Caco-2 (cell line): ENCODE measurements at regions of chr15 and their contacts with region 1.

Region 1: GRCh38 chr15:84929744-84930371 is 45.4 kb downstream of the SLC28A1 start:
- DNase-seq: peak; percentile 84 to 94
- H3K4me3 ChIP-seq: no peak overlapping the region
- H3K4me3 Mint-ChIP-seq: peak overlapping the region; percentile 25
- H3K27ac Mint-ChIP-seq: peak overlapping the region; percentile 85
- H3K4me1 ChIP-seq: peaks cover 31% of the 10 kb centered on the region
- H3K4me1 Mint-ChIP-seq: peaks cover 16% of the 10 kb centered on the region
- H3K27me3 ChIP-seq: no peaks in the 10 kb centered on the region
- H3K27me3 Mint-ChIP-seq: no peaks in the 10 kb centered on the region
- CTCF ChIP-seq: no peak

Region 2: GRCh38 chr15:84658080-84658787 is 271.6 kb before region 1 on chr15 and contains the start of gene NMB:
- CTCF ChIA-PET with region 1: interaction called, 4 read pairs
- POLR2A ChIA-PET with region 1: interaction called, 4 read pairs
- intact Hi-C with region 1: loop called (anchors 1 kb)
- DNase-seq: peak; percentile 89 to 92
- H3K4me3 ChIP-seq: peak within 1 kb of the TSS; percentile 60
- H3K4me3 Mint-ChIP-seq: peak within 1 kb of the TSS; percentile 77
- H3K27ac Mint-ChIP-seq: peak within 1 kb of the TSS; percentile 35
- H3K4me1 ChIP-seq: peaks cover 10% of the 10 kb centered on the region; the same call in 1 of the 2 replicates
- H3K4me1 Mint-ChIP-seq: peaks cover 6% of the 10 kb centered on the region
- H3K27me3 ChIP-seq: no peaks in the 10 kb centered on the region
- H3K27me3 Mint-ChIP-seq: no peaks in the 10 kb centered on the region
- CTCF ChIP-seq: peak; percentile 80 to 94
- total RNA-seq, gene NMB: 7.5 and 8.6 TPM in 2 replicates

Region 3: DNA sequence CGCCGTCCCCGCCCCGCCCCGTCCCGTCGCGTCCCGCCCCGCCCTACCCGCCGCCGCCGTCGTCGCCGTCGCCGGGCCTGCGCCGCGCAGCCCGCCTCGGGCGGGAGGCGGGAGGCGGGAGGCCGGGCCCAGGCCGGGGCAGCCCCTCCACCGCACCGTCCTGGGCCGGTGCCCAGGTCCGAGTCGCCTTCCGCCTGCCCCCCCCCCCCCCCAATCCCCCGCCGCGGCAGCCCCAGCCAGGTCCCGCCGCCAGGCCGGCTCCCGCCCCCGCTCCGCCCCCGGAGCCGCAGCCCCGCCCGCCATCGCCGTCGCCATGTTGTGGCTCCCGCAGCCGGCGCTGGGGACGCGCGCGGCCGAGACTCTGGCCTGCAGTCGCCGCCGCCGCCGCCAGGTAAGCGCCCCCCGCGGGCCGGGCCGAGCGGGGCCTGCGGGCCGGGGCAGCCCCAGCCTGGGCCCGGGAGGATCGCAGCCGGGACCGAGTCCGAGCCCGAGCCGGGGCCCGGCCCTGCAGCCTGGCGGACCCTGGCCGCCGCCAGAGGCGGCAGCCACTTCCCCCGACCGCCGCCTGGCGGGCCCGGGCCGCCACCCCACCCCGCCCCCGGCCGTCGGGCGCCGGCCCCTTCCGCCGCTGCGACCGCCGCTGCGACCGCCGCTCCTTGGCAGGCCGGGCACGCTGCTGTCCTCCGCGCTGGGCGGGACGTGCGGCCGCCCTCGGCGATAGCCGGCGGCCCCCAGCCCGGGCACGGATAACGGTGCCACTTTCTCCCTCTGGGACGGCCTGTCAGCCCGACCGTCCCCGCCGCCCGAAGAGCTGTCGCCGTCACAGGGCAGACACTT is 181.4 kb before region 1 on chr15 and contains the start of gene ZNF592:
- CTCF ChIA-PET with region 1: no interaction called
- POLR2A ChIA-PET with region 1: no interaction called
- intact Hi-C with region 1: loop called (anchors 10 kb)
- DNase-seq: peak; percentile 75 to 87
- H3K4me3 ChIP-seq: peak within 1 kb of the TSS; percentile 89
- H3K4me3 Mint-ChIP-seq: peak within 1 kb of the TSS; percentile 94
- H3K27ac Mint-ChIP-seq: peak within 1 kb of the TSS; percentile 97
- H3K4me1 ChIP-seq: peaks cover 39% of the 10 kb centered on the region
- H3K4me1 Mint-ChIP-seq: peaks cover 34% of the 10 kb centered on the region
- H3K27me3 ChIP-seq: no peaks in the 10 kb centered on the region
- H3K27me3 Mint-ChIP-seq: no peaks in the 10 kb centered on the region
- CTCF ChIP-seq: no peak
- total RNA-seq, gene ZNF592: 29.1 and 30.6 TPM in 2 replicates

Region 4: GRCh38 chr15:84844964-84845363 is 84.9 kb before region 1 on chr15:
- CTCF ChIA-PET with region 1: interaction called, 12 read pairs
- POLR2A ChIA-PET with region 1: no interaction called
- intact Hi-C with region 1: loop called (anchors 1 kb)
- DNase-seq: no peak
- H3K4me3 ChIP-seq: no peak overlapping the region
- H3K4me3 Mint-ChIP-seq: no peak overlapping the region
- H3K27ac Mint-ChIP-seq: no peak overlapping the region
- H3K4me1 ChIP-seq: no peaks in the 10 kb centered on the region
- H3K4me1 Mint-ChIP-seq: no peaks in the 10 kb centered on the region
- H3K27me3 ChIP-seq: no peaks in the 10 kb centered on the region
- H3K27me3 Mint-ChIP-seq: no peaks in the 10 kb centered on the region
- CTCF ChIP-seq: no peak